ENCODE measurements at regions of chr15 and their contacts with region 1.

Region 1: DNA sequence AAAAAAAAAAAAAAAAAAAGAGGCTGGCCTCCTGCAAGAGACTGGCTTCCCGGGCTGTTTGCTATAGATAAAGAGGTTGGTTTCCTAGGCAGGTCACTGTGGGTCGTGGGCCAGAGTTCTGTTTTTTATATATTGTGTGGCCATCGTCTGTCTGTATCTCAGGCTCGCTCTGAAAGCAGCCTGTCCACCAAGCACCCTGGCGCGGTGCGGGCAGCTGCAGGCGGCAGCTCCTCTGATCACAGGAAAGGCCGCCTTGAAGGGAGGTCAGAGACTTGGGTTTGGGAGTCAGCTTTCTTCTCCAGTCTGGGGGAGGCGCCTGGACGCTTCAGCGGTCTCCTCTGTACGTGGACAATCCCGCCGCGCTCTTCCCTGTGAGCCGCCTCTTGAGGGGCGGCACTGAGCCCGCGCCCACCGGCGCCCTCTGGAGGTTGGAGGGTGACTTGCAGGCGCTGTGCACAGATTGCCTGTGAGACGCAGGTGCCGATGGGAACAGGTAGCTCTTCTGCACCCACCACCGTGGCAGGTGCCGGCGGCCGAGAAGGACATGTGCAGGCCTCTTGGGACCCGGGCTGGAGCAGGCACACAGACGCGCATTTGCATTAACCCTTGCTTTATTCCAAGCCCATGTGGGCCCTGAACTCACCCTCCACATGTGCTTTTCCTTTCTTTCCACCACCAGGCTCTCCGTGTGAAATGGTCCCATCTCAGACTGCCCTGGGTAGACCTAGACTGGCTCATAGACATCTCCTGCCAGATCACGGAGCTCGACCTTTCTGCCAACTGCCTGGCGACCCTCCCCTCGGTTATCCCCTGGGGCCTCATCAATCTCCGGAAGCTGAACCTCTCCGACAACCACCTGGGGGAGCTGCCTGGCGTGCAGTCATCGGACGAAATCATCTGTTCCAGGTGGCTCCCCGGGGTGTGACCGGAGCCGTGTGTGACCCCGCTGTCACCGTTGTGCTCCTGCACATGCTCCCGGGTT is 89.3 kb downstream of the LRRK1 start:
- DNase-seq: peak; percentile 87
- H3K4me3 Mint-ChIP-seq: peak overlapping the region; percentile 83
- H3K27ac Mint-ChIP-seq: no peak overlapping the region
- H3K4me1 Mint-ChIP-seq: peaks cover 23% of the 10 kb centered on the region
- H3K27me3 Mint-ChIP-seq: peaks cover 29% of the 10 kb centered on the region

Region 2: GRCh38 chr15:100918034-100918689 is 90.3 kb before region 1 on chr15:
- CTCF ChIA-PET with region 1: interaction called, 169 read pairs
- POLR2A ChIA-PET with region 1: interaction called, 8 read pairs
- DNase-seq: peak; percentile 75
- H3K4me3 Mint-ChIP-seq: peak overlapping the region; percentile 56
- H3K27ac Mint-ChIP-seq: no peak overlapping the region
- H3K4me1 Mint-ChIP-seq: peaks cover 27% of the 10 kb centered on the region
- H3K27me3 Mint-ChIP-seq: peaks cover 70% of the 10 kb centered on the region

Region 3: GRCh38 chr15:101024073-101024695 is 15.7 kb after region 1 on chr15:
- CTCF ChIA-PET with region 1: interaction called, 66 read pairs
- POLR2A ChIA-PET with region 1: no interaction called
- DNase-seq: peak; percentile 1
- H3K4me3 Mint-ChIP-seq: no peak overlapping the region
- H3K27ac Mint-ChIP-seq: no peak overlapping the region
- H3K4me1 Mint-ChIP-seq: no peaks in the 10 kb centered on the region
- H3K27me3 Mint-ChIP-seq: peaks cover 9% of the 10 kb centered on the region

Region 4: DNA sequence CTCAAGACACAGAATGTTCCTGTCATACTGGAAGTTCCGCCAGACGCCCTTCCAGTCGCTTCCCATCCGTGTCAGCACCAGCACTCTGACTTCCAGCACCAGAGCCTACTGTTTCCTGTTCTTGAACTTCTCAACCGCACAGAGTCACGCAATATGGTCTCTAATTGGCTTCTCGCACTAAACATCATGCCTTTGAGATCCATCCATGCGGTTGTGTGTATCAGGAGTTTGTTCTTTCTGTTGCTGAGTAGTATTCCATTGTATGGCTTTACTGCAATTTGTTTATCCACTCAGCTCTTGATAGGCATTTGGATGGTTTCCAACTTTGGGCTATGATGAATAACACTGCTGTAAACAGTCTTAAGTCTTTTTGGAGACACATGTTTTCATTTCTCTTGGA is 22.8 kb after region 1 on chr15:
- CTCF ChIA-PET with region 1: interaction called, 12 read pairs
- POLR2A ChIA-PET with region 1: no interaction called
- DNase-seq: peak; percentile 9
- H3K4me3 Mint-ChIP-seq: no peak overlapping the region
- H3K27ac Mint-ChIP-seq: no peak overlapping the region
- H3K4me1 Mint-ChIP-seq: peaks cover 3% of the 10 kb centered on the region
- H3K27me3 Mint-ChIP-seq: peaks cover 46% of the 10 kb centered on the region

Region 5: DNA sequence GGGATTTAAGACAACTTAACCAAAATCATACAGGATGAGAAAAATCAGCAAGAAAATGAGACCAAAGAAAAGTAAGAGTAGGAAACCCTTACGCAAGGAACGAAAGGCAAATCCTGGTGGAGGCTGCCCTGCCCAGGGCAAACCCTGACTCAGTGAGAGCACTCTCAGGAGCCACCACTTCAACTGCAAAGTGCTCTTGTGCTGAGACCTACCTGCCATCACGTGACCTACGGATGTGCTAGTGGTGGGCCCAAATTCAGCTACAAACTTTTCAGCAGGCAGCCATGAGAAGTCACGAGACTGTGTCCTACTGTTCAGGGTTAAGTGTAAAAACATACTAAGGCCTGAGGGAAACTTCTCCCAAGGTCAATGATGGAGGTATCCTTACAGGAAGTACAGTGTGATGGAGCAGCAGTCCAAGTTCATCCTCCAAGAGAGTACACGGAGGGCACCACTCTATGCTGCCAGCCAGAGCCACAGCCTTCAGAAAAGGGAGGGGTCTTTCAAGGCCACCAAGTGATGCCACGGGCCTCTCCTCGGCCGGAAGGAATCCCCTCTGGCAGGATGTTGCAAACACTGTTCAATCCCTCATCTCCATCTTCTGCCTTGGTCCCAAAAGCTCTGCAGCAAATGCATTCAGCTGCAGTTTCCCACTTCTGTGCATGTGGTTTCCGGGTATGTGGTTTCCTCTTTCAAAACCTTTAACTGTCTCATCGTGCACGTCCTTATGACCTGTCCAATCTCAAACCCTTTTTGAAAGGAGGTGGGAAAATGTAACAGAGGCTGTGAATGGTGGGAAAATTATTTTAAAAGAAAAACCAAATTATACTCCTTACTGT is 233.9 kb after region 1 on chr15:
- CTCF ChIA-PET with region 1: interaction called, 28 read pairs
- POLR2A ChIA-PET with region 1: no interaction called
- DNase-seq: peak; percentile 80
- H3K4me3 Mint-ChIP-seq: peak overlapping the region; percentile 60
- H3K27ac Mint-ChIP-seq: peak overlapping the region; percentile 84
- H3K4me1 Mint-ChIP-seq: peaks cover 95% of the 10 kb centered on the region
- H3K27me3 Mint-ChIP-seq: no peaks in the 10 kb centered on the region

Region 6: DNA sequence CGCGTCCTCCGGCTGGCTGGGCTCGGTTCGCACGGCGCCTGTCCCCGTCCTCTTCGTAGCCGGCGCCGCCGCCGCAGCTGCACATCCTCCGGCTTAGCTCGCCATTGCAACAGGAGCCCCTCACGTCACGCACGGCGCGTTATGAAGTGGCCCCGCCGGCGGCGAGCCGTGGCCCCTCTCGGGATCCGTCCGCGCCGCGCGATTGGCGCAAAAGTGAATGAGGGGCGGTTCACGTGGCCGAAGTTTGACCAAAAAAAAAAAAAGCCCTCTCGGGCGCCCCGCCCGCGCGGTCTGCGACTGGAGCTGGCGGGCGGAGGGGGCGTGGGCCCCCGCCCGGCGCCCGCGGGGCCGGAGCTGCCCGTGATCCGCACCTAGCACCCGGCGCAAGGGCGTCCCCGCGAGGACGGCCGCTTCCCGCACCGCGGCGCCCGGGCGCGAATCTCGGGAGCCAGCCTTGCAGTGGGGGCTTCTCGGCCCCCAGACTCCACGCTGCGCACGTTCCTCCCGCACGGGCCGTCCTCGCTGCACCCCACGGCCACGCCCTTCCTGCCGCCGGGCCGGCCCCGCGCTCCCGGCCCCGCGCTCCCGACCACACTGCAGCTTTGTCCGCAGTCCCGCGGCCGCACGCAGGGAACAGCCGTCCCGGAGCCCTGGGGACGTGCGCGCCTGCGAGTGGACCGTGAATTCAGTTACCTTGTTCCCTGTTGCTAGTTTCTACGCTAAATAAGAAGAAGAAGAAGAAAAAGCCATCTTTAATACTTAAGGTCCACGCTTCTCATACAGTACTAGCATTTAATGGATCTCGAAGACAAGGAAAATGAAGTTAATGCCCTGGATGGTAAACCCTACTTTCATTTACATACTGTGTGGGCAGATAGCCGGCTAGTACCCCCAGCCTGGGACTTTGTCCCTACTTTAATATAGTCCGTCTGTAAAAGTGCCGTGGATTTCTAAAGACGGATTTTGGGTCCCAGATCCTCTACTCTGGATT is 243.7 kb after region 1 on chr15 and contains the start of gene CHSY1:
- CTCF ChIA-PET with region 1: interaction called, 120 read pairs
- POLR2A ChIA-PET with region 1: no interaction called
- DNase-seq: peak; percentile 90
- H3K4me3 Mint-ChIP-seq: peak within 1 kb of the TSS; percentile 95
- H3K27ac Mint-ChIP-seq: peak within 1 kb of the TSS; percentile 86
- H3K4me1 Mint-ChIP-seq: peaks cover 70% of the 10 kb centered on the region
- H3K27me3 Mint-ChIP-seq: no peaks in the 10 kb centered on the region
- total RNA-seq, gene CHSY1: 61.7 to 62.0 TPM

Measured in activated CD4-positive, alpha-beta memory T cell treated with anti-CD3 and anti-CD28 coated beads, Interleukin-2, amount 10 ng/mL, durations not matched to agents 7 days and 5 days (primary cell).